HepG2 (cell line): ENCODE measurements at regions of chr18 and their contacts with region 1.

Region 1: DNA sequence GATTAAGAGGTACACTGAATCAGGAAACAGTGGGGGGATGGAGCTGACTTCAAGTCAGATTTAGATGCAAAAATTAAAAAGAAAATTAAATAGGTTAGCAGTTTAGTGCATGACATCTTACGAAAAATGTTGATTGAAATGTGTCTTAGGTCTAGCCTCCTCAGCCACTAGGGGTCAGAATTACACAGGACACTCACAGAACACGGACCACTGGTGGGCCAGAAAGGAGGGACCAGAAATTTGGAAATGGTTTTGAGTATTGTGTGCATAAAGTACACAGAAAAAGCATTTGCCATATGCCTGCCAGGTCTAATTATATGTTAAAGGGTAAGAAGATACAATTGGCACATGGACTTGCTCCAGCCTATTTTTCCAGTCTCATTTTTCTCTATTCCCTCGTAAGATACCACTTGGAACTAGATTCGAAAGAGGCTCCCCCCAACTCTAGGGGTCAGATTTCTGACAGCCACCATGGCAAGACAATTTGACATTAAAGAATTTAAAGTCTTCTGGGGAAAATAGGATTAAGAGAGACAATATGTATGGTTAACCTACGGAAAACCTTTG is 550.2 kb upstream of the SETBP1 start:
- DNase-seq: peak; percentile 10
- ATAC-seq: peak; percentile 63
- H3K4me3 ChIP-seq: no peak overlapping the region
- H3K27ac ChIP-seq: no peak overlapping the region
- H3K4me1 ChIP-seq: no peaks in the 10 kb centered on the region
- H3K27me3 ChIP-seq: no peaks in the 10 kb centered on the region
- CTCF ChIP-seq: peak; percentile 55
- EP300 ChIP-seq: no peak
- POLR2A ChIP-seq: no peak
- RAD21 ChIP-seq: no peak

Region 2: DNA sequence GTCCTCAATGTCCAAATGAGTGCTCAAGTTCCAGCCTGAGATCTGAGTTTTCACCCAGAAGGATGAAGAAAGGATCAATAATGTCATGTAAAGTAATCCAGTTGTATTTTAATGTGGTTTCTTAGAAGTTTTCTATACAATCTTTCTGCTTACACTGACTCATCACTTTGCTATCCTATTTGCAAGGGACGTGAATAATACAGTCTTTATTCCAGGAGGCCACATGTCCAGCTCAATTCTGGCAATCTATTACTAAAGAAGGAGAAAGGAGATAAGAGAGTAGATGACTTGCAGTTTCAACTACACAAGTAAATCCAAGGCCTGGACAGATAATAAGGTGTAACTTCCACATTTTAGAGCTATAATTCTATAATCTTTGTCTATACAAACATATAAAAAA is 50.9 kb before region 1 on chr18:
- CTCF ChIA-PET with region 1: no interaction called
- POLR2A ChIA-PET with region 1: no interaction called
- in situ Hi-C with region 1: no loop called
- intact Hi-C with region 1: no loop called
- DNase-seq: peak; percentile 4
- ATAC-seq: no peak
- H3K4me3 ChIP-seq: no peak overlapping the region
- H3K27ac ChIP-seq: no peak overlapping the region
- H3K4me1 ChIP-seq: no peaks in the 10 kb centered on the region
- H3K27me3 ChIP-seq: no peaks in the 10 kb centered on the region
- CTCF ChIP-seq: no peak
- EP300 ChIP-seq: no peak
- POLR2A ChIP-seq: no peak
- RAD21 ChIP-seq: no peak

Region 3: GRCh38 chr18:44325903-44326635 is 195.6 kb after region 1 on chr18:
- CTCF ChIA-PET with region 1: no interaction called
- POLR2A ChIA-PET with region 1: no interaction called
- in situ Hi-C with region 1: no loop called
- intact Hi-C with region 1: loop called (anchors 2 kb)
- DNase-seq: no peak
- ATAC-seq: no peak
- H3K4me3 ChIP-seq: no peak overlapping the region
- H3K27ac ChIP-seq: no peak overlapping the region
- H3K4me1 ChIP-seq: no peaks in the 10 kb centered on the region
- H3K27me3 ChIP-seq: no peaks in the 10 kb centered on the region
- CTCF ChIP-seq: no peak
- EP300 ChIP-seq: no peak
- POLR2A ChIP-seq: no peak
- RAD21 ChIP-seq: no peak

Region 4: DNA sequence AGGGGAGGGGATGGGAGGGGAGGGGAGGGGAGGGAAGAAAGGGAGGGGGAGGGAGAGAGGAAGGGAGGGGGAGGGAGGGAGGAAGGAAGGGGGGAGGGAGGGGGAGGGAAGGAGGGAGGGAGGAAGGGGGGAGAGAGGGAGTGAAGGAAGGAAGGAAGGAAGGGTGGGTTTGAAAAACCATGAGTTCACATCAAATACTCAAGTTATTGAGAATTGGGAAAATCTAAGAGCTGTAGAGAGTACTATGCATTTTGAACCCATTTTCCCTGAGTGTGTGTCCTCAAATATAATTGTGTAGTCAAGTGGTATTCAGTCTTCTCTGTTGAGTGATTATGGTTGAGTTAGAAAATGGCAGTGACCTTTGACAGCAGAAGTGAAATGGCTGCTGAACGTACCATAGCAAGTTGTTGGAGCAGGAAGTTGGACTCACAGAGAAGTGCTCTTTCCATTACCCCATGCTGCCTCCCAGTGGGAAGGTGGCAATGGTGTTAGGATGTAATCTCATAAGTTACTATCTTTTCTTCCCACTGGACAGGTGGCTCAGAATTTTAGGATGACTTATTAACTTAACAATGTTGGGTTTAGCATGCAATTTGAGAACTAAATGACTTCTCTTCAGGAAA is 764.8 kb after region 1 on chr18:
- CTCF ChIA-PET with region 1: no interaction called
- POLR2A ChIA-PET with region 1: no interaction called
- in situ Hi-C with region 1: no loop called
- intact Hi-C with region 1: loop called (anchors 5 kb)
- DNase-seq: no peak
- ATAC-seq: peak; percentile 29; the same call in 1 of the 3 replicates
- H3K4me3 ChIP-seq: no peak overlapping the region
- H3K27ac ChIP-seq: no peak overlapping the region
- H3K4me1 ChIP-seq: no peaks in the 10 kb centered on the region
- H3K27me3 ChIP-seq: no peaks in the 10 kb centered on the region
- CTCF ChIP-seq: peak; percentile 52
- EP300 ChIP-seq: no peak
- POLR2A ChIP-seq: no peak
- RAD21 ChIP-seq: no peak

Region 5: GRCh38 chr18:45384137-45384961 is 1253.9 kb after region 1 on chr18:
- CTCF ChIA-PET with region 1: no interaction called
- POLR2A ChIA-PET with region 1: no interaction called
- in situ Hi-C with region 1: no loop called
- intact Hi-C with region 1: loop called (anchors 10 kb)
- DNase-seq: peak; percentile 27
- ATAC-seq: peak; percentile 84
- H3K4me3 ChIP-seq: no peak overlapping the region
- H3K27ac ChIP-seq: no peak overlapping the region
- H3K4me1 ChIP-seq: no peaks in the 10 kb centered on the region
- H3K27me3 ChIP-seq: no peaks in the 10 kb centered on the region
- CTCF ChIP-seq: peak; percentile 55
- EP300 ChIP-seq: no peak
- POLR2A ChIP-seq: no peak
- RAD21 ChIP-seq: no peak